CD4-positive, alpha-beta T cell (primary cell): ENCODE measurements at regions of chr6 and their contacts with region 1.

Region 1: GRCh38 chr6:106360410-106360988 is at the start of gene CRYBG1:
- DNase-seq: peak; percentile 52 to 89 (median 65)
- ATAC-seq: peak; percentile 97
- H3K4me3 ChIP-seq: peak within 1 kb of the TSS; percentile 59
- H3K4me3 Mint-ChIP-seq: peak within 1 kb of the TSS; percentile 85
- H3K27ac ChIP-seq: no peak within 1 kb of the TSS
- H3K27ac Mint-ChIP-seq: no peak within 1 kb of the TSS
- H3K4me1 ChIP-seq: peaks cover 14% of the 10 kb centered on the region
- H3K4me1 Mint-ChIP-seq: peaks cover 6% of the 10 kb centered on the region
- H3K27me3 ChIP-seq: peaks cover 22 to 32% of the 10 kb centered on the region in 2 experiments
- H3K27me3 Mint-ChIP-seq: peaks cover 49% of the 10 kb centered on the region
- CTCF ChIP-seq: peak; percentile 89
- total RNA-seq, gene CRYBG1: 58.5 to 59.4 TPM

Region 2: DNA sequence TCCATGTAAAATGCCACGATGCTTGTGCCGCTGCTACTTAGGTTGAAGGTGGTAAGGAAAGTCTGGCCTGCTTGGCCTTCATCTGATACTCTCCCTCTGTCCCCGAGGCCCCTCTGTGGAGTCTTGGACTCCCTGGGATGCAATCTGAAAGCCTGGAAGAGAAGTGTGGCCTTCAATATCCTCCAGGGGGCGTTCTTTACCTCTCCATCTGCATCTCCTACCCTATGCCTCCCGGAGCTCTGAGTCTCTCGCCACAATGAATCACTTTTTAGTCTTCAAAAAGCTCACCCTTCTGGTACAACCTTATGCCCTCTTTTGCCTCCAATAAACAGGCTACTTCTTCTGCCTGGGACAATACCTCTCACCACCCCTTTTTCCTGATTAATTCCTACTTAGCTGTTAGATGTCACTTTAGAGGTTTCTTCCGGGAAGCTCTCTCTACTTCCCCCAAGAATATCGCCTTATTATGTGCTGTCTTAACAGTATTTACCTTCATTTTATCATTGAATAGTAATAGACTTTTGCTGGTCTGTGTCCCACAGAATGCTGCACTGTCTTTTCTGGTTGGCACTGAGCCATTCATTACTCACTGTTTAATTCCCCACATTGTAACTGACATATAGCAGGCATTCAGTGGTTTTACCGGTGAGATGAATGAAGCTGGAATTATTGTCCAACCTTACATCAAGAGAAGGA is 21.0 kb before region 1 on chr6:
- CTCF ChIA-PET with region 1: interaction called, 11 read pairs
- POLR2A ChIA-PET with region 1: no interaction called
- intact Hi-C with region 1: no loop called
- DNase-seq: peak in 12 of 14 experiments; percentile 4 to 74 (median 32)
- ATAC-seq: peak; percentile 80
- H3K4me3 ChIP-seq: no peak overlapping the region
- H3K4me3 Mint-ChIP-seq: no peak overlapping the region
- H3K27ac ChIP-seq: no peak overlapping the region
- H3K27ac Mint-ChIP-seq: no peak overlapping the region
- H3K4me1 ChIP-seq: peaks cover 3% of the 10 kb centered on the region
- H3K4me1 Mint-ChIP-seq: no peaks in the 10 kb centered on the region
- H3K27me3 ChIP-seq: peaks cover 5 to 8% of the 10 kb centered on the region in 2 experiments
- H3K27me3 Mint-ChIP-seq: peaks cover 52% of the 10 kb centered on the region
- CTCF ChIP-seq: peak; percentile 73

Region 3: DNA sequence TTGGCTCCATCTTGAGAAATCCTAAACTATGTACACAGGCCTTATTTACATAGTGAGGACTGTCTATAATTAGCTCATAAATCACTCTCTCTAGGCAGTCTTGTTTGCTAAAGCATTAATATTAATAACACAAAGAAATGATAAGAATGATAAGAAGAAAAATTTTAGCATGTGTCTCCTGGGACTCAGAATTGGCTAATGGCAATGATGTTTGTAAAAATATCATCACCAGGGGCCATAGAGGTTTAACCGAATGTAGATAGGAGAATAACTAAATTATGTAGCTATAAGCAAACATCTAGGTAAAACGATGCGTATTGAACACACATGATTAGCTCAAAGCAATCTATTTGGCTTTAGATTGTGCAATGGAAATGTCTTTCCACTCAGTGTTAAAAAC is 13.2 kb before region 1 on chr6:
- CTCF ChIA-PET with region 1: interaction called, 10 read pairs
- POLR2A ChIA-PET with region 1: no interaction called
- intact Hi-C with region 1: no loop called
- DNase-seq: no peak
- ATAC-seq: no peak
- H3K4me3 ChIP-seq: no peak overlapping the region
- H3K4me3 Mint-ChIP-seq: no peak overlapping the region
- H3K27ac ChIP-seq: no peak overlapping the region
- H3K27ac Mint-ChIP-seq: no peak overlapping the region
- H3K4me1 ChIP-seq: no peaks in the 10 kb centered on the region
- H3K4me1 Mint-ChIP-seq: no peaks in the 10 kb centered on the region
- H3K27me3 ChIP-seq: no peaks in the 10 kb centered on the region
- H3K27me3 Mint-ChIP-seq: peaks cover 32% of the 10 kb centered on the region
- CTCF ChIP-seq: no peak

Region 4: GRCh38 chr6:106381871-106382270 is 21.4 kb after region 1 on chr6:
- CTCF ChIA-PET with region 1: no interaction called
- POLR2A ChIA-PET with region 1: no interaction called
- intact Hi-C with region 1: no loop called
- DNase-seq: peak in 2 of 14 experiments; percentile 6 to 8
- ATAC-seq: no peak
- H3K4me3 ChIP-seq: no peak overlapping the region
- H3K4me3 Mint-ChIP-seq: no peak overlapping the region
- H3K27ac ChIP-seq: no peak overlapping the region
- H3K27ac Mint-ChIP-seq: no peak overlapping the region
- H3K4me1 ChIP-seq: no peaks in the 10 kb centered on the region
- H3K4me1 Mint-ChIP-seq: no peaks in the 10 kb centered on the region
- H3K27me3 ChIP-seq: no peaks in the 10 kb centered on the region
- H3K27me3 Mint-ChIP-seq: peaks cover 5% of the 10 kb centered on the region
- CTCF ChIP-seq: no peak

Region 5: GRCh38 chr6:106451439-106451838 is 90.9 kb after region 1 on chr6:
- CTCF ChIA-PET with region 1: no interaction called
- POLR2A ChIA-PET with region 1: no interaction called
- intact Hi-C with region 1: no loop called
- DNase-seq: no peak
- ATAC-seq: no peak
- H3K4me3 ChIP-seq: no peak overlapping the region
- H3K4me3 Mint-ChIP-seq: no peak overlapping the region
- H3K27ac ChIP-seq: no peak overlapping the region
- H3K27ac Mint-ChIP-seq: no peak overlapping the region
- H3K4me1 ChIP-seq: peaks cover 9% of the 10 kb centered on the region
- H3K4me1 Mint-ChIP-seq: peaks cover 15% of the 10 kb centered on the region
- H3K27me3 ChIP-seq: no peaks in the 10 kb centered on the region
- H3K27me3 Mint-ChIP-seq: no peaks in the 10 kb centered on the region
- CTCF ChIP-seq: no peak

Region 6: DNA sequence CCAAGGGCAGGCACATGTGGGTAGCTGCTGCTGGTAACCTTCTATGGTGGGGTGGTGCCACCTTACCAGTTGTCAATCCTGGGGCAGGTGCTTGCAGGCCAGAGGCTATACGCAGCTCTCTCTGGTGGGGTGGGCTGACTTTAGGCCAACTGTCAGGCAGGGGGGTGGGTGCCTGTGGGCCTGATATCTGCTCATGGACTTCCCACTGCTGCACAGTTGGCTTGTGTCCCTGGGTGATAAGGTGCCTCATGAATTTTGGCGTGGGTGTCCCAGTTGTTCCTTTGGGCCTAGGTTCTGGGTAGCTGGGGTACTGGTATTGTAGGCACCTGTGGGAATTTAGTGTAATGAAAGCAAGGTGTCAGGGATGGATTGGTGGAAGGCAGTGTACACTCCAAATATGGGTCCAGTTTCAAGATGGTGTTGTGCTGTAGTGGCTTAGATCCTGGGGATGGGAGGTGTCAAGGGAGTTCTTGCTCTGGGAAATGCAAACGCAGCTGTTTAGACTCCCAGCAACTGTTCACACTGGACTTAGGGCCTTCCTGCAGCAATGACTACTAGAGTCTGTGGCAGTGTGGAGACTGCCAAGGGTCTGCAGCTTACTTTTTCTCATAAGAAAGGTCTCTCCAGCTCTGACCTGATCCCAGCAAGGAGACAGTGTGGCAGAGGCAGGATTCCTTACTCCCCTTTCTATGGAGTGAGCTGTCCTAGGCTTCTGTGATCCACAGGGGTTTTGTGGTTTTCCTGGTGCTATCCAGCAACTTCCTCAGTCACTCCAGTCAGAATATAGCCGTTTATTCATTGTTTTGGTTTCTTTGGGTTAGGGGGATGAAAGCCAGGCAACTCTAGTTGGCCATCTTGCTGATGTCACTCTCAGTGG is 128.2 kb after region 1 on chr6:
- CTCF ChIA-PET with region 1: no interaction called
- POLR2A ChIA-PET with region 1: no interaction called
- intact Hi-C with region 1: no loop called
- DNase-seq: no peak
- ATAC-seq: no peak
- H3K4me3 ChIP-seq: no peak overlapping the region
- H3K4me3 Mint-ChIP-seq: no peak overlapping the region
- H3K27ac ChIP-seq: no peak overlapping the region
- H3K27ac Mint-ChIP-seq: no peak overlapping the region
- H3K4me1 ChIP-seq: no peaks in the 10 kb centered on the region
- H3K4me1 Mint-ChIP-seq: no peaks in the 10 kb centered on the region
- H3K27me3 ChIP-seq: no peaks in the 10 kb centered on the region
- H3K27me3 Mint-ChIP-seq: peaks cover 6% of the 10 kb centered on the region
- CTCF ChIP-seq: no peak